ENCODE measurements at regions of chr17 and their contacts with region 1.

Region 1: DNA sequence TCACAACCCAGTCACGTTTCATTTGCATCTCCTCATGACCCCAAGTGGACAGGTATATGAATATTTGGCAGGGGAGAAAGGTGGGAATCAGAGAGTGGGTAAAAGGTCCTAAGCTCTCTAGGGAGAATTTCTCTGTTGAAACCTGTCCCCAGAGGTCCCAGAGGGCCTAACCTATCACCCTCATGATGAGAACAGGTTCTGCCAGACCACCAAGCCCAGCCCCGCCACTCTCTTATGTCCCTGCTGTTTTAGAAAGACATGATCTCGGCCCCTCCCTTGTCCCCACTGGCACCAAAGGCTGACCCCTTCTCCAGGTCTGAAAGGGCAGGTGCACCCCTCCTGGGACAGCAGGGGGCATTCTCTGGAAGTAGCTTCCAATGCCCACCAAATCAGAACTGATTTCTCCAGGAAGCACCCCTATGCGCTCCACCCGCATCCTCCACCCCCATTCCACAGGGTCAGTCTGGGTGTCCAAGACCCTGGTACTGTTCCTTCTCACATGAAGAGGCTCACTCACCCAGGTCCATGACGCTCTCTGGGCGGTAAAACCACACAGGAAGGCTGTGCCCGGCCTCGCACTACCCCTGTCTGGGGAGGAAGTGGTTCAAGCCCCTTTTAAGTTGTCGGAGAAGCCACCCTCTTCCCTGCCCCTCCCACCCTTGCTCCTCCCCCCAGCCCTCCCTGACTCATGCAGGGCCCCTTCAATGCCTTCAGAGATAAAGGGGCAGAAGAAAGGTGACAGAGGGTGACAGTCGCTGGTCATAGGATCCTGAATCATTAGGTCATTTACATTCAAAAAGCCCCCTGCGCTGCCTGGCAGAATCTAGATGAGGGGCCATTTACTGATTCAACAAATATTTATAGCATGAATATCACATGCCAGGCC is at the start of gene CCR7:
- DNase-seq: peak; percentile 68 to 92 (median 86)
- ATAC-seq: peak; percentile 77
- H3K4me3 ChIP-seq: peak within 1 kb of the TSS; percentile 90
- H3K4me3 Mint-ChIP-seq: peak within 1 kb of the TSS; percentile 90 to 100 (median 98)
- H3K27ac ChIP-seq: peak within 1 kb of the TSS; percentile 99
- H3K27ac Mint-ChIP-seq: peak within 1 kb of the TSS; percentile 92 to 100 (median 100)
- H3K4me1 ChIP-seq: peaks cover 37 to 72% of the 10 kb centered on the region in 2 donors
- H3K4me1 Mint-ChIP-seq: peaks cover 29 to 57% (median 52%) of the 10 kb centered on the region in 7 donors
- H3K27me3 ChIP-seq: no peaks in the 10 kb centered on the region
- H3K27me3 Mint-ChIP-seq: peaks cover 0 to 2% (median 0%) of the 10 kb centered on the region in 5 donors
- total RNA-seq, gene CCR7: 153 to 675 (median 262) TPM

Region 2: DNA sequence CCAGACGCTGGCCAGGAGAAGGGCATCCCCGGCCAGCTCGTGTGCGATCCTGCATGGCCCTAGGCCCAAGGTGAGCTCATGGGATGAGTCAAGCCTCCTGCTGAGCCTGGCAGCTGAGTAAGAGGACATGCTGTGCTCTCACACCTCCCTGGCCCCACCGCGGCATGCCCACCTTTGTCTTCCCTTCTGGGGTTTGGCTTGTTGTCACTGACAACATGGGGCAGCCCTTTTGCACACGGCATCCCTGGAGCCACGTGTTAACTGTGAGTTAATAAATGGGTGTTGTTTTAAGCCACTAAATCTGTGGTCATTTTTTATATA is 54.8 kb before region 1 on chr17:
- CTCF ChIA-PET with region 1: no interaction called
- POLR2A ChIA-PET with region 1: no interaction called
- intact Hi-C with region 1: no loop called
- DNase-seq: no peak
- ATAC-seq: no peak
- H3K4me3 ChIP-seq: no peak overlapping the region
- H3K4me3 Mint-ChIP-seq: no peak overlapping the region
- H3K27ac ChIP-seq: no peak overlapping the region
- H3K27ac Mint-ChIP-seq: no peak overlapping the region
- H3K4me1 ChIP-seq: peaks cover 9 to 10% of the 10 kb centered on the region in 2 donors
- H3K4me1 Mint-ChIP-seq: peaks cover 15 to 29% (median 23%) of the 10 kb centered on the region in 7 donors
- H3K27me3 ChIP-seq: no peaks in the 10 kb centered on the region
- H3K27me3 Mint-ChIP-seq: peaks cover 0 to 10% (median 0%) of the 10 kb centered on the region in 5 donors

Region 3: GRCh38 chr17:40576225-40576651 is 11.1 kb after region 1 on chr17:
- CTCF ChIA-PET with region 1: interaction called, 54 read pairs
- POLR2A ChIA-PET with region 1: interaction called, 1,524 read pairs
- intact Hi-C with region 1: loop called (anchors 1 kb)
- DNase-seq: peak in 2 of 9 donors; percentile 48 to 54
- ATAC-seq: peak; percentile 60
- H3K4me3 ChIP-seq: no peak overlapping the region
- H3K4me3 Mint-ChIP-seq: peak overlapping the region; percentile 56 to 84 (median 64)
- H3K27ac ChIP-seq: peak overlapping the region; percentile 79
- H3K27ac Mint-ChIP-seq: peak overlapping the region; percentile 60 to 98 (median 95)
- H3K4me1 ChIP-seq: peaks cover 8 to 58% of the 10 kb centered on the region in 2 donors
- H3K4me1 Mint-ChIP-seq: peaks cover 35 to 94% (median 81%) of the 10 kb centered on the region in 7 donors
- H3K27me3 ChIP-seq: no peaks in the 10 kb centered on the region
- H3K27me3 Mint-ChIP-seq: no peaks in the 10 kb centered on the region

Region 4: GRCh38 chr17:40582328-40582901 is 17.3 kb after region 1 on chr17:
- CTCF ChIA-PET with region 1: interaction called, 54 read pairs
- POLR2A ChIA-PET with region 1: interaction called, 1,524 read pairs
- intact Hi-C with region 1: loop called (anchors 1 kb)
- DNase-seq: peak in 7 of 9 donors; percentile 75 to 90 (median 86)
- ATAC-seq: peak; percentile 91
- H3K4me3 ChIP-seq: peak overlapping the region; percentile 46
- H3K4me3 Mint-ChIP-seq: peak overlapping the region; percentile 73 to 88 (median 77)
- H3K27ac ChIP-seq: peak overlapping the region; percentile 84
- H3K27ac Mint-ChIP-seq: peak overlapping the region; percentile 91 to 99 (median 96)
- H3K4me1 ChIP-seq: peaks cover 27 to 76% of the 10 kb centered on the region in 2 donors
- H3K4me1 Mint-ChIP-seq: peaks cover 63 to 100% (median 97%) of the 10 kb centered on the region in 7 donors
- H3K27me3 ChIP-seq: no peaks in the 10 kb centered on the region
- H3K27me3 Mint-ChIP-seq: no peaks in the 10 kb centered on the region

Region 5: DNA sequence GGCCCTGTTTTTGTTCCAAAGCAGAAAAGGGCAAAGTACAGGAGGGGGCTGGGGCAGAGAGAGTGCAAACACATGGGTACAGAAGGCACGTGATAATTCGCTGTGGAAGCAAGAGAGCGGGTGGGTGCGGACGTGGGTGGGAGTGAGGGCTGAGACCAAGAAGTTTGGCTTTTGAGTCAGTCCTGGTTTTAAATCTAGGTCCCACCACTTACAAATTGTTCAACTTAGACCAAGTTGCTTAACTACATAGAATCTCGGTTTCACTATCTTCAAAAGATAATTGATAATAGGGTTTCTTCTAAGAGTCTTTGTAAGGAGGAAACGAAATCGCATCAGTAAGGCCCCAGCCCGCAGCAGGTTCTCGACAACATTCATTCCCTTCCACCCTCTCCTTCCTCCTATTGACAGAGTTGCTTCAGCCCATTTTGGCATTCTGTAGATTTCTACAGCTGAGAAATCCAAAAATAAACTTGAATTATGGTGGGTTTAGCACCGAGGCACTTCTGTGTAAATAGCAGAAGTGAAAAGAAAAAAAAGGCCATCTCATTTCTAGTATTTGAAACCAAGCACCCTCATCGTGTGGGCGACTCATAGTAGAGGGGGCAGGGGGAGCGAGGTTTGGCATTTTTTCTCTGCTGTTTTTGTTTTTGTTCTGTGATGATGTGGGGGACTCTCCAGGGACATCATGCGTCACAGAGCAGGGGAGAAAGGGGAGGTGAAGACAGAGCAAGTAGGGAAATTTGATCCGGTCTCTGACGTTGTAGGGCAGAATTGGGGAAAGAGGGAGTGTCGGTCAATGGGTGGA is 33.7 kb after region 1 on chr17:
- CTCF ChIA-PET with region 1: interaction called, 75 read pairs
- POLR2A ChIA-PET with region 1: interaction called, 2,132 read pairs
- intact Hi-C with region 1: loop called (anchors 1 kb)
- DNase-seq: peak in 8 of 9 donors; percentile 67 to 93 (median 80)
- ATAC-seq: peak; percentile 80
- H3K4me3 ChIP-seq: peak overlapping the region; percentile 25
- H3K4me3 Mint-ChIP-seq: peak overlapping the region; percentile 53 to 88 (median 76)
- H3K27ac ChIP-seq: peak overlapping the region; percentile 94
- H3K27ac Mint-ChIP-seq: peak overlapping the region; percentile 95 to 100 (median 99)
- H3K4me1 ChIP-seq: peaks cover 62 to 98% of the 10 kb centered on the region in 2 donors
- H3K4me1 Mint-ChIP-seq: peaks cover 64 to 100% (median 96%) of the 10 kb centered on the region in 7 donors
- H3K27me3 ChIP-seq: no peaks in the 10 kb centered on the region
- H3K27me3 Mint-ChIP-seq: no peaks in the 10 kb centered on the region

Region 6: GRCh38 chr17:40608061-40608588 is 43.0 kb after region 1 on chr17:
- CTCF ChIA-PET with region 1: interaction called, 425 read pairs
- POLR2A ChIA-PET with region 1: interaction called, 2,132 read pairs
- intact Hi-C with region 1: loop called in 1 of 2 experiments (anchors 1 kb)
- DNase-seq: peak in 8 of 9 donors; percentile 39 to 90 (median 85)
- ATAC-seq: peak; percentile 80
- H3K4me3 ChIP-seq: peak overlapping the region; percentile 62
- H3K4me3 Mint-ChIP-seq: peak overlapping the region; percentile 64 to 88 (median 78)
- H3K27ac ChIP-seq: peak overlapping the region; percentile 94
- H3K27ac Mint-ChIP-seq: peak overlapping the region; percentile 90 to 100 (median 99)
- H3K4me1 ChIP-seq: peaks cover 83 to 98% of the 10 kb centered on the region in 2 donors
- H3K4me1 Mint-ChIP-seq: peaks cover 43 to 100% (median 94%) of the 10 kb centered on the region in 7 donors
- H3K27me3 ChIP-seq: no peaks in the 10 kb centered on the region
- H3K27me3 Mint-ChIP-seq: no peaks in the 10 kb centered on the region

Region 7: GRCh38 chr17:40714473-40714872 is 149.3 kb after region 1 on chr17:
- CTCF ChIA-PET with region 1: no interaction called
- POLR2A ChIA-PET with region 1: no interaction called
- intact Hi-C with region 1: no loop called
- DNase-seq: no peak
- ATAC-seq: no peak
- H3K4me3 ChIP-seq: no peak overlapping the region
- H3K4me3 Mint-ChIP-seq: no peak overlapping the region
- H3K27ac ChIP-seq: no peak overlapping the region
- H3K27ac Mint-ChIP-seq: no peak overlapping the region
- H3K4me1 ChIP-seq: no peaks in the 10 kb centered on the region
- H3K4me1 Mint-ChIP-seq: no peaks in the 10 kb centered on the region
- H3K27me3 ChIP-seq: no peaks in the 10 kb centered on the region
- H3K27me3 Mint-ChIP-seq: peaks cover 0 to 15% (median 6%) of the 10 kb centered on the region in 5 donors

Region 8: DNA sequence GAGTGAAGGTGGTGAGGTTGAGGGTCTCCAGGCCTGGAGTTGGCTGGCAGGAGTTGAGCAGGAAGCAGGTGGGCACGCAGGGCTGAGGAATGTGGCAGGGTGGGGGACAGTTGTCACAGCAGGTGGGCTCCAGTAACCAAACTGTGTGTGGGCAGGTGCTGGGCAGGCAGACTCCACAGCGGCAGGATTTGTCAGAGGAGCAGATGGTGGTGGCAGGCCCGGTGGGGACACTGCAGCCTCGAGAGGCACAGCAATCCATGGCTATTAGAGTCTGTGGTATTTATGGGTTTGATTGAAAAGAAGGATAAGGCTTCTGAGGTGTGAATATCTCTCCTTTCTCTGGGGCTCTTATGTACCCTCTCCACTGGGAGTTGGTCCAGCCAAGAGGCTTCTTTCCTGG is 428.7 kb after region 1 on chr17 and contains the start of gene KRTAP3-3:
- CTCF ChIA-PET with region 1: no interaction called
- POLR2A ChIA-PET with region 1: no interaction called
- intact Hi-C with region 1: no loop called
- DNase-seq: no peak
- ATAC-seq: no peak
- H3K4me3 ChIP-seq: no peak within 1 kb of the TSS
- H3K4me3 Mint-ChIP-seq: no peak within 1 kb of the TSS
- H3K27ac ChIP-seq: no peak within 1 kb of the TSS
- H3K27ac Mint-ChIP-seq: no peak within 1 kb of the TSS
- H3K4me1 ChIP-seq: no peaks in the 10 kb centered on the region
- H3K4me1 Mint-ChIP-seq: no peaks in the 10 kb centered on the region
- H3K27me3 ChIP-seq: peaks cover 0 to 4% of the 10 kb centered on the region in 2 donors
- H3K27me3 Mint-ChIP-seq: peaks cover 23 to 57% (median 53%) of the 10 kb centered on the region in 5 donors
- total RNA-seq, gene KRTAP3-3: not detected

Measured in naive thymus-derived CD4-positive, alpha-beta T cell (primary cell).